PC-9 (cell line): ENCODE measurements at regions of chr12 and their contacts with region 1.

Region 1: GRCh38 chr12:57213058-57213715 is 3.4 kb upstream of the NXPH4 start:
- DNase-seq: peak; percentile 69 to 92
- H3K4me3 ChIP-seq: peak overlapping the region; percentile 36; the same call in 1 of the 2 replicates
- H3K27ac ChIP-seq: peak overlapping the region; percentile 60
- H3K4me1 ChIP-seq: peaks cover 17% of the 10 kb centered on the region
- H3K27me3 ChIP-seq: no peaks in the 10 kb centered on the region
- CTCF ChIP-seq: peak; percentile 92

Region 2: GRCh38 chr12:56104109-56104814 is 1108.9 kb before region 1 on chr12 and contains the start of gene PA2G4:
- CTCF ChIA-PET with region 1: interaction called, 13 read pairs
- POLR2A ChIA-PET with region 1: no interaction called
- intact Hi-C with region 1: no loop called
- DNase-seq: peak; percentile 97 to 98
- H3K4me3 ChIP-seq: peak within 1 kb of the TSS; percentile 97
- H3K27ac ChIP-seq: peak within 1 kb of the TSS; percentile 50
- H3K4me1 ChIP-seq: peaks cover 25% of the 10 kb centered on the region
- H3K27me3 ChIP-seq: no peaks in the 10 kb centered on the region
- CTCF ChIP-seq: no peak
- total RNA-seq, gene PA2G4: 120 and 159 TPM in 2 replicates

Region 3: DNA sequence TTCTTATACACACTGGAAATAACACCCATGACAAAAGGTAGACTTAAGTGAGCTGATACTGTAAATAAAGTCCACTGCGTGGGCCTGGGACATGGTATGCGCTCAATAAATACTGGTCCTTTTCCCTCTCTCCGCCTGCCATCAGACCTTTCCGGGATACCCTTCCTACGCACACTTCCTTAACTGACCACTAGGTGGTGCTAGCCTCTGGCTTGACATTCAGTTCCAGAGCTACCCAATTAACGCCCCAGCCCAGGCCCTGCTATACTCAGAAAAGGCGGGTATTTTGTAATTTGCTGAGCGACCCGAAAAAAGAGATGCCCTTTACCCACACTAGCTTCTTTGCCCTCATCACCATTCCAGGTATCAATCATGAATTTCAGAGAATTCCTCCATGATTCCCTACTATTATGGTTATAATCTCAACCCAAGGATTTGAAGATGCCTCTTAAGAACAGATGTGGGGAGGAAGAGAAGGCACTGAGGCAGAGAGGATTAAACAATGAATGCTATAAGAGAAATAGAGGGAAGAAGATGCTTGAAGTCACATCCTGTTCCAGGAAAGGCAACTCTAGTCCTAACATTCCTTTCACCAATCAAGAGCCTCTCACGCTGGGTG is 88.8 kb before region 1 on chr12:
- CTCF ChIA-PET with region 1: no interaction called
- POLR2A ChIA-PET with region 1: interaction called, 11 read pairs
- intact Hi-C with region 1: no loop called
- DNase-seq: peak; percentile 51 to 62
- H3K4me3 ChIP-seq: no peak overlapping the region
- H3K27ac ChIP-seq: no peak overlapping the region
- H3K4me1 ChIP-seq: peaks cover 8% of the 10 kb centered on the region
- H3K27me3 ChIP-seq: no peaks in the 10 kb centered on the region
- CTCF ChIP-seq: peak; percentile 95

Region 4: GRCh38 chr12:57157588-57158173 is 55.5 kb before region 1 on chr12:
- CTCF ChIA-PET with region 1: no interaction called
- POLR2A ChIA-PET with region 1: interaction called, 11 read pairs
- intact Hi-C with region 1: no loop called
- DNase-seq: no peak
- H3K4me3 ChIP-seq: no peak overlapping the region
- H3K27ac ChIP-seq: no peak overlapping the region
- H3K4me1 ChIP-seq: no peaks in the 10 kb centered on the region
- H3K27me3 ChIP-seq: no peaks in the 10 kb centered on the region
- CTCF ChIP-seq: no peak

Region 5: DNA sequence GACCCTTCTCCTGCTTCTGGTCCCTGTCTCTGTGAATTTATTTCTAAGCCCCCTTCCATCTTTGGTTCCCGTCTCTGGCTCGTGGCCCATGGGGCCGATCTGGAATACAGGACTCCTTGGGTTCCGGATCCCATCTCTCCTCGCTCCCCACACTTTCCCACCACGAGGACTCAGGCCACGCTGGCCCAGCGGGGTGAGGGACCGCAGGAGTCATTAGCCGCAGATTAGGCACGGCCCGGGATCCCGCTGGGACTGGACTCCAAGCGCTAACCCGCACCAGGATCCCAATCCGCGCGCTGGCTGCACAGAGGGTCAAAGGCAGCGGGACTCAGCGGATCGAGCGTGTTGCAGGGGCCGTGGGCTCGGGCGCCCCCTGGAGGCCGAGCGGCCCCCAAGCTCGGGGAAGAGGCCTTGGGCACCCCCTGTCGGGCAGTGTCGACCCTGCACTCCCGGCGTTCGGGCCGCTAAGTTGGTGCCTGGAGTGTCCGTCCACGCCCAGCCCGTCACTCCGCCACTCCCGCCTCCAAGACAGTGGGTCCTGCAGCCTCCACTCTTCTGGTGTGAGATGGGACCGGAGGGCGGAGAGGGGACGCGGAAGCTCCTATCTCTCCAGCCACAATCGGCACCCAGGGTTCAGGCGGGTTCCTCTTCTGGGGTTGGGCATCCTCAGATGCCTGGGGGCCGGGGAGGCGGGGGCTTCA is 25.8 kb after region 1 on chr12:
- CTCF ChIA-PET with region 1: interaction called, 25 read pairs
- POLR2A ChIA-PET with region 1: no interaction called
- intact Hi-C with region 1: loop called (anchors 1 kb)
- DNase-seq: peak; percentile 48 to 89
- H3K4me3 ChIP-seq: peak overlapping the region; percentile 51; the same call in 1 of the 2 replicates
- H3K27ac ChIP-seq: no peak overlapping the region
- H3K4me1 ChIP-seq: peaks cover 22% of the 10 kb centered on the region; the same call in 1 of the 2 replicates
- H3K27me3 ChIP-seq: peaks cover 30% of the 10 kb centered on the region
- CTCF ChIP-seq: peak; percentile 97

Region 6: DNA sequence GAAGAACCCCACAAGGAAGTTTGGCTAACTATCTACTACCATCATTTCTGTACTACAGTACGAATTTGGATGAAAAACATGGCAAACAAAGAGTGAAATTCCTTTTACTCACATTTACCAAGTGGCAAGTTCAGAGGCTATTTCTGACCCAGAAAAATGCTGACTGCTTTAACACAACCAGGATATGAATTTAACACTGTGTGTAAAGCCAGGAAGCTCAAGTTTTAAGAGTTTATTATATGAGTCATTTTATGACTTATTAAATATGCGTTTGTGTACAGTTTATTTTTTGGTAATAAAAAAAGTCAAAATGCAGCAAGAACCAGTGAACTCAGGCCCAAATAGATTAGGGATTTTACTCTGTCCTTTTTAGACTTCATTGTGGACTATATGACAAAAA is 96.2 kb after region 1 on chr12:
- CTCF ChIA-PET with region 1: no interaction called
- POLR2A ChIA-PET with region 1: no interaction called
- intact Hi-C with region 1: no loop called
- DNase-seq: peak in 1 of 2 experiments; percentile 77
- H3K4me3 ChIP-seq: no peak overlapping the region
- H3K27ac ChIP-seq: peak overlapping the region; percentile 59
- H3K4me1 ChIP-seq: peaks cover 19% of the 10 kb centered on the region
- H3K27me3 ChIP-seq: no peaks in the 10 kb centered on the region
- CTCF ChIP-seq: no peak